Panc1 (cell line): ENCODE measurements at regions of chr1 and their contacts with region 1.

Region 1: DNA sequence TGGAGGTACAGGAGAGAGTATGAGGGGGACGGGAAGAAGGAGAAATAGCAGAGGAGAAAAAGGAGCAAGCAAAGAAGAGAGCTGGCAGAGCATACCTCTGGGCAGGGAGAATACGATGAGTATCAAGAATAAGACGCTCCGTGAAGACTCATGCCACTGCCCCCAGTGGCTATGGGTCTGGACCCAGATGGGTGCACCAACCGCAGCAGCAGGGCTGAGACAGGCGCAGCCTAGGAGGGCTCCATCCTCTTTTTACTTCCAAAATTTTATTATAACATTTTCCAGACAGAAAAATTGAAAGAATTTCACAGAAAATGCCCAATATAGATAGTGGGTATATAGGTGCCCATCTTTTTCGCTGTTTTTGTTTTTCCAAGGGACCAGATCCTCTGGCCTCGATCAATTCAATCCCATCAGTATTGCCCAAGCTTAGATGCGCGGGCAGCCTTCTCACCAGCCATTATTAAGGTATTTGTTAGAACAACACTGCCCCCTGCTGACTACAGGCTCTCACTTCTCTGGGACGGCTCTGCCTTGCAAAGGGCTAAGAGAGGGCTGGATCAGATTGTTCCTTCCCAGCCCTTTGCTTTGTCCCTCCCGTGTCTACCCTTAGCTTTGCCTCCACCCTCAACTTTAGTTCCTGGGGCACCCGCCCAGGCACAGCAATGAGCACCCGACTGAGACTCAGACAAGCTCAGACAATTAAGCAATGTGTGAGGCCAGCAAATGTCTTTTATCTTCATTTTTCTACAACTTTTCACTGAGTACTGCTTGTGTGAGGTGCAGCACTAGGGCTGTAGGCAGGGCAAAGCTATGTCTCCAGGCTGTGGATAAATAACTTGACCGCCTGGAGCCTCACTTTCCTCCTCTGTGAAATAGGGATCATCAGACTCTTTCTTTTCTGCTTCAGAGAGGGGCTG is 17.5 kb upstream of the CAMK1G start:
- DNase-seq: peak; percentile 38
- ATAC-seq: peak; percentile 97
- H3K4me3 ChIP-seq: no peak overlapping the region
- H3K27ac ChIP-seq: no peak overlapping the region
- H3K4me1 ChIP-seq: no peaks in the 10 kb centered on the region
- H3K27me3 ChIP-seq: no peaks in the 10 kb centered on the region
- CTCF ChIP-seq: peak; percentile 87

Region 2: GRCh38 chr1:208170252-208170651 is 1395.8 kb before region 1 on chr1:
- CTCF ChIA-PET with region 1: no interaction called
- POLR2A ChIA-PET with region 1: no interaction called
- in situ Hi-C with region 1: no loop called
- intact Hi-C with region 1: no loop called
- DNase-seq: no peak
- ATAC-seq: no peak
- H3K4me3 ChIP-seq: no peak overlapping the region
- H3K27ac ChIP-seq: no peak overlapping the region
- H3K4me1 ChIP-seq: no peaks in the 10 kb centered on the region
- H3K27me3 ChIP-seq: no peaks in the 10 kb centered on the region; the same call in 1 of the 2 replicates
- CTCF ChIP-seq: no peak

Region 3: GRCh38 chr1:209207701-209208286 is 358.2 kb before region 1 on chr1:
- CTCF ChIA-PET with region 1: interaction called, 3 read pairs
- POLR2A ChIA-PET with region 1: no interaction called
- in situ Hi-C with region 1: no loop called
- intact Hi-C with region 1: loop called (anchors 10 kb)
- DNase-seq: no peak
- ATAC-seq: peak; percentile 92
- H3K4me3 ChIP-seq: peak overlapping the region in 1 of 2 experiments; percentile 11; a peak in 1 of 4 replicates
- H3K27ac ChIP-seq: no peak overlapping the region
- H3K4me1 ChIP-seq: no peaks in the 10 kb centered on the region
- H3K27me3 ChIP-seq: peaks cover 14% of the 10 kb centered on the region; the same call in 1 of the 2 replicates
- CTCF ChIP-seq: peak; percentile 90

Region 4: DNA sequence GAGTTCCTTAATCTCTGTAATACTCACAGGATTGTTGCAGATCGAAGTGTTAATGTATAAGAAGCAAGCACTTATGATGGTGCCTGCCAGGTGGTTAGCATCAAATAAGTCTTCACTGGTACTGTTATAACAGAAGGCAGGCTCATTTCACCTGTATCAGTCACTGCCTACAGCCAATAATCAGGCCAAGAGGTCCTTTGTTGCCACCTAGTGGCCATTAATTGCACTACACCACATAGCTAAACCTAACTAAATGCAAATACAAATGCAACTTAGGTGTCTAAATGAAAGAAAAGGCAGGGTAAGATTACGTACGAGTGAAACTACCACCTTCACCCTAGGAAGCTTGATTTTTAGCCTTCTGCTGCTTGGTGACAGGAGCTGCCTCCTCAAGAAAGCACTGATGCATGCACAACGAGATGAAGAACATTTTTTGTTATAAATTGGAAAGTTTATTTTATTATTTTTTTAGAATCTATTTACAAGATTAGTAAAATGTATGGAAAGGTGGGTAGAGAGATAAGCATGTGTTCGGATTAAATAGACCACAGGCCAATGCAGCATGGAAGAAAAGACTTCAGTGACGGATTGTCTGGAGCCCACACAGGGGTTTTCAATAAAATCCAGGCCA is 317.3 kb before region 1 on chr1:
- CTCF ChIA-PET with region 1: interaction called, 3 read pairs
- POLR2A ChIA-PET with region 1: no interaction called
- in situ Hi-C with region 1: no loop called
- intact Hi-C with region 1: loop called (anchors 10 kb)
- DNase-seq: peak; percentile 71
- ATAC-seq: peak; percentile 85
- H3K4me3 ChIP-seq: no peak overlapping the region
- H3K27ac ChIP-seq: no peak overlapping the region
- H3K4me1 ChIP-seq: no peaks in the 10 kb centered on the region
- H3K27me3 ChIP-seq: no peaks in the 10 kb centered on the region
- CTCF ChIP-seq: peak; percentile 92

Region 5: GRCh38 chr1:209291715-209292114 is 274.3 kb before region 1 on chr1:
- CTCF ChIA-PET with region 1: no interaction called
- POLR2A ChIA-PET with region 1: no interaction called
- in situ Hi-C with region 1: no loop called
- intact Hi-C with region 1: no loop called
- DNase-seq: no peak
- ATAC-seq: no peak
- H3K4me3 ChIP-seq: no peak overlapping the region
- H3K27ac ChIP-seq: no peak overlapping the region
- H3K4me1 ChIP-seq: no peaks in the 10 kb centered on the region
- H3K27me3 ChIP-seq: no peaks in the 10 kb centered on the region
- CTCF ChIP-seq: no peak

Region 6: GRCh38 chr1:209354111-209354839 is 211.7 kb before region 1 on chr1:
- CTCF ChIA-PET with region 1: interaction called, 3 read pairs
- POLR2A ChIA-PET with region 1: no interaction called
- in situ Hi-C with region 1: no loop called
- intact Hi-C with region 1: loop called (anchors 5 kb)
- DNase-seq: peak; percentile 43
- ATAC-seq: peak; percentile 99
- H3K4me3 ChIP-seq: no peak overlapping the region
- H3K27ac ChIP-seq: no peak overlapping the region
- H3K4me1 ChIP-seq: no peaks in the 10 kb centered on the region
- H3K27me3 ChIP-seq: no peaks in the 10 kb centered on the region
- CTCF ChIP-seq: peak; percentile 86

Region 7: DNA sequence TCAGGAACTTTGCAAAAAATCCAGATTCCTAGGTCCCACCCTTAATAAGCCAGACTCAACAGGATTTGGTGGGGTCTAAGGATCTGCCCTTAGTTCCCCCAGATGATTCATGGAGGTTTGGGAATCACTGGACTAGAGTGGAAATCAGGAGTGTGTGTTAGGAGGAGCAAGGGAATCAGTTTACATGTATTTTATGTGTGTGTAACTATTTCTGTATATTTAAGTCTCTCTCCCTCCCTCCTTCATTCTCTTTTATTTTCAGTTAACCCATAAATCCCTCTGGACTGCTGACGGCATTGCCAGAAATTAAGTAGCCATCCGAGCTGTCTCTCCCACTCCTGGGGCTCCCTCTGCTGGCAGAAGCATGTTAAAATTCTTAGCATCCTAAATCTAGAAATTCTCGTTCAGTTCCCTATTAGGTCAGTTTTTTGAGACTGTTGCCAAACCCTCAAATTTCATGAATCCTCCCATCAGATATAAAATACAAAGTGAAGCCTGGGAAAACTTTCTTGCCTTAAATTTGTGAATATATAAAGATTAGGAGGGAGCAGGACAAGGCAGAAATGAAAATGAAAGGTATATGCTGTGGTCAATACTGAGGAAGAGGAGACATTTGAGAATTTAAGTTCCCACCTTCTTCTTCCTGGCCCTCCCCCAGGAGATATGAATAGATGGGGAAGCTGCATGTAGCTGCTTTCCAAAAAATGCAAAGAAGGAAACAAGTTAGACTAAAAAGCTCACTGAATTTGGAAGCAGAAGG is 126.9 kb after region 1 on chr1:
- CTCF ChIA-PET with region 1: interaction called, 4 read pairs
- POLR2A ChIA-PET with region 1: no interaction called
- in situ Hi-C with region 1: no loop called
- intact Hi-C with region 1: loop called (anchors 2 kb)
- DNase-seq: peak; percentile 52
- ATAC-seq: peak; percentile 74
- H3K4me3 ChIP-seq: no peak overlapping the region
- H3K27ac ChIP-seq: no peak overlapping the region
- H3K4me1 ChIP-seq: no peaks in the 10 kb centered on the region
- H3K27me3 ChIP-seq: no peaks in the 10 kb centered on the region
- CTCF ChIP-seq: peak; percentile 91

Region 8: GRCh38 chr1:209747580-209748262 is 181.7 kb after region 1 on chr1:
- CTCF ChIA-PET with region 1: no interaction called
- POLR2A ChIA-PET with region 1: no interaction called
- in situ Hi-C with region 1: no loop called
- intact Hi-C with region 1: loop called (anchors 2 kb)
- DNase-seq: peak; percentile 82
- ATAC-seq: peak; percentile 96
- H3K4me3 ChIP-seq: peak overlapping the region; percentile 21 to 49
- H3K27ac ChIP-seq: no peak overlapping the region
- H3K4me1 ChIP-seq: no peaks in the 10 kb centered on the region
- H3K27me3 ChIP-seq: peaks cover 4% of the 10 kb centered on the region; the same call in 1 of the 2 replicates
- CTCF ChIP-seq: peak; percentile 95